IMR-90 (cell line): ENCODE measurements at regions of chr5 and their contacts with region 1.

Region 1: DNA sequence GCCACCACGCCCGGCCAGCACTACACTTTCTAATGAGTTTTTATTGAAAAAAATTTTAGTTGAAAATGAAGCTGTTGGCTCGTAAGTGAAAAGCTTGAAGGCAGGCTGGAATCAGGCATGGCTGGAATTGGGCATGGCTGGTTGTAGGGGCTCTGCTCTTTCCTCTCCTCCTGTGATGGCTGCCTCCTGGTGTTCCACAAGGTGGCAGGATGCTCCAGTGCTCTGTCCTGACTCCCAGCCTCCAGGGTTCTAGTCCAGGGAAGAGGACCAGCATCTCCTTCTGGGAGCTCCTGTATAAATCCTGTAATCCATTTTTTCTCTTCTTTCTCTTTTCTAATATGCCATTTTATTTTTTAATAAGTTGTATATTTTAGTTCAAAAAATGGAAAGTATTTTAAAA is 57.2 kb upstream of the DHFR start:
- DNase-seq: peak; percentile 34
- ATAC-seq: peak; percentile 86
- H3K4me3 ChIP-seq: no peak overlapping the region
- H3K27ac ChIP-seq: no peak overlapping the region
- H3K4me1 ChIP-seq: peaks cover 3% of the 10 kb centered on the region
- H3K27me3 ChIP-seq: no peaks in the 10 kb centered on the region
- CTCF ChIP-seq: peak; percentile 44
- POLR2A ChIP-seq: no peak
- RAD21 ChIP-seq: peak; percentile 65

Region 2: DNA sequence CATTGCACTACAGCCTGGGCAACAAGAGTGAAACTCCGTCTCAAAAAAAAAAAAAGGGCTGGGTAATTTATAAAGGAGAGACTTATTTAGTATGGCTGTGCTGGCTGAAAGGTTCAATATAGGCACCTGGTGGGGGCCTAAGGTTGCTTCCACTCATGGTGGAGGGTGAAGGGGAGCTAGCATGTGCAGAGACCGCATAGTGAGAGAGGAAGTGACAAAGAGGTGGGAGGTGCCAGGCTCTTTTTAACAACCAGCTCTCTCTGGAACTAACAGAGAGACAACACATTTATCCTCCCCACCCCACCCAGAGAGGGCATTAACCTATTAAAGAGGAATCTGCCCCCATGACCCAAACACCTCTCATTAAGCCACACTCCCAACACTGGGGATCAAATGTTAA is 427.2 kb before region 1 on chr5:
- CTCF ChIA-PET with region 1: no interaction called
- POLR2A ChIA-PET with region 1: no interaction called
- dilution Hi-C with region 1: no loop called
- in situ Hi-C with region 1: no loop called
- intact Hi-C with region 1: no loop called
- DNase-seq: no peak
- ATAC-seq: no peak
- H3K4me3 ChIP-seq: no peak overlapping the region
- H3K27ac ChIP-seq: no peak overlapping the region
- H3K4me1 ChIP-seq: no peaks in the 10 kb centered on the region
- H3K27me3 ChIP-seq: peaks cover 8% of the 10 kb centered on the region
- CTCF ChIP-seq: no peak
- POLR2A ChIP-seq: no peak
- RAD21 ChIP-seq: no peak

Region 3: GRCh38 chr5:80565330-80565729 is 146.6 kb before region 1 on chr5:
- CTCF ChIA-PET with region 1: no interaction called
- POLR2A ChIA-PET with region 1: no interaction called
- dilution Hi-C with region 1: no loop called
- in situ Hi-C with region 1: no loop called
- intact Hi-C with region 1: no loop called
- DNase-seq: no peak
- ATAC-seq: no peak
- H3K4me3 ChIP-seq: no peak overlapping the region
- H3K27ac ChIP-seq: no peak overlapping the region
- H3K4me1 ChIP-seq: no peaks in the 10 kb centered on the region; the same call in 1 of the 2 replicates
- H3K27me3 ChIP-seq: peaks cover 47% of the 10 kb centered on the region
- CTCF ChIP-seq: no peak
- POLR2A ChIP-seq: no peak
- RAD21 ChIP-seq: no peak

Region 4: DNA sequence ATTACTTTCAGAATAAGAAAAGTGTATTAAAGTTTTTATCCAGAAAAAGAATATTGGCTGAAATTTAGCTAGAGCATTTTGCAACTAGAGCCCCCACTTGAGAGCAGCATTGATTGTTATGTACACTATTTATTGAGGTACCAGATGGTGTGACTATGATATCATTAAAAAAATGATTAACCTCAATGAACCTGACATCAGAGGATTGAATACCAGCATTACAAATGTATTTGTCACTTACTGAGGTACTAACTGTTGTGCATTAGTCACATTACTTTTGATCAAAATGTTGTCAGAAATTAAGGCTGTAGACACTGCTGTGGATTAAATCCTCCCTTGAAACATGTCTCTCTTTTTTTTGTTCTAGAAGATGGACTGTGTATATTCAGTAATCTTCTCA is 70.7 kb after region 1 on chr5:
- CTCF ChIA-PET with region 1: no interaction called
- POLR2A ChIA-PET with region 1: no interaction called
- dilution Hi-C with region 1: no loop called
- in situ Hi-C with region 1: no loop called
- intact Hi-C with region 1: no loop called
- DNase-seq: no peak
- ATAC-seq: no peak
- H3K4me3 ChIP-seq: no peak overlapping the region
- H3K27ac ChIP-seq: no peak overlapping the region
- H3K4me1 ChIP-seq: no peaks in the 10 kb centered on the region
- H3K27me3 ChIP-seq: no peaks in the 10 kb centered on the region
- CTCF ChIP-seq: no peak
- POLR2A ChIP-seq: no peak
- RAD21 ChIP-seq: no peak

Region 5: DNA sequence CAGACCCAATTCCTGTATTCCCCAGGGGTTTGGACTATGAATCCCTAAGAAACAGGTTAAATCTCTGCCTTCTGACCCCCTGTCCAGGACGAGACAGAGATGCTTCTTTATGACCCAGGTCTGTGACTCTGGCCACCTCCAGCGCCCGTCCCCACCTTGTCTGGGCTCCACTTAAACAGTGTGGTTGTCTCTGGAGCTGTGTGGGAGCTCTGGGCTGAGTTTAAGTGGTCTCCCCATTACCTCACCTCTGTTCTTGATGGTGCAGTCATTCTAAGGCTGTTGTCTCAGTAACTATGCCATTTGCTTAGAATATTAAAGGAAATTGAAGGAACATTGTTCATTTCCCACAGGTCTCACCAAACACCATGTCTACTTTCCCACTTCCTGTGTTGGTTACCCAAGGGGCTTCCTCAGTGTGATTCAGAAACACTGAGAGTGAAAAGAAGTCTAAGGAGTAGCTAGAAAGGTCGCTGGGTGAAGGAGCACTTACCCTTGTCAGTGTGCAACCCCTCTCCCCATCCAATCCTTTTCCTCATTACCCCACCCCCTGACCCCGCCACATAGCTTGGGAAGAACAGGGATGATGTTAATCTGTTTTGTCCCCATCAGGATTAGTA is 393.4 kb after region 1 on chr5:
- CTCF ChIA-PET with region 1: interaction called, 3 read pairs
- POLR2A ChIA-PET with region 1: no interaction called
- dilution Hi-C with region 1: no loop called
- in situ Hi-C with region 1: no loop called
- intact Hi-C with region 1: loop called (anchors 5 kb)
- DNase-seq: no peak
- ATAC-seq: no peak
- H3K4me3 ChIP-seq: no peak overlapping the region
- H3K27ac ChIP-seq: no peak overlapping the region
- H3K4me1 ChIP-seq: no peaks in the 10 kb centered on the region
- H3K27me3 ChIP-seq: no peaks in the 10 kb centered on the region
- CTCF ChIP-seq: no peak
- POLR2A ChIP-seq: no peak
- RAD21 ChIP-seq: no peak

Region 6: GRCh38 chr5:81194633-81195333 is 482.8 kb after region 1 on chr5:
- CTCF ChIA-PET with region 1: interaction called, 3 read pairs
- POLR2A ChIA-PET with region 1: interaction called, 4 read pairs
- dilution Hi-C with region 1: no loop called
- in situ Hi-C with region 1: no loop called
- intact Hi-C with region 1: loop called (anchors 5 kb)
- DNase-seq: peak; percentile 70
- ATAC-seq: peak; percentile 100
- H3K4me3 ChIP-seq: no peak overlapping the region
- H3K27ac ChIP-seq: no peak overlapping the region
- H3K4me1 ChIP-seq: no peaks in the 10 kb centered on the region; the same call in 1 of the 2 replicates
- H3K27me3 ChIP-seq: no peaks in the 10 kb centered on the region
- CTCF ChIP-seq: peak; percentile 95
- POLR2A ChIP-seq: no peak
- RAD21 ChIP-seq: peak; percentile 94